Activated CD4-positive, alpha-beta memory T cell treated with anti-CD3 and anti-CD28 coated beads, Interleukin-2, amount 10 ng/mL, durations not matched to agents 7 days and 5 days (primary cell): ENCODE measurements at regions of chr9 and their contacts with region 1.

Region 1: GRCh38 chr9:19174127-19174912 is 47.0 kb upstream of the PLIN2 start:
- DNase-seq: peak; percentile 58
- H3K4me3 Mint-ChIP-seq: peak overlapping the region; percentile 57
- H3K27ac Mint-ChIP-seq: no peak overlapping the region
- H3K4me1 Mint-ChIP-seq: peaks cover 29% of the 10 kb centered on the region
- H3K27me3 Mint-ChIP-seq: no peaks in the 10 kb centered on the region

Region 2: GRCh38 chr9:19074229-19074628 is 100.1 kb before region 1 on chr9:
- CTCF ChIA-PET with region 1: no interaction called
- POLR2A ChIA-PET with region 1: no interaction called
- DNase-seq: no peak
- H3K4me3 Mint-ChIP-seq: no peak overlapping the region
- H3K27ac Mint-ChIP-seq: no peak overlapping the region
- H3K4me1 Mint-ChIP-seq: no peaks in the 10 kb centered on the region
- H3K27me3 Mint-ChIP-seq: no peaks in the 10 kb centered on the region

Region 3: DNA sequence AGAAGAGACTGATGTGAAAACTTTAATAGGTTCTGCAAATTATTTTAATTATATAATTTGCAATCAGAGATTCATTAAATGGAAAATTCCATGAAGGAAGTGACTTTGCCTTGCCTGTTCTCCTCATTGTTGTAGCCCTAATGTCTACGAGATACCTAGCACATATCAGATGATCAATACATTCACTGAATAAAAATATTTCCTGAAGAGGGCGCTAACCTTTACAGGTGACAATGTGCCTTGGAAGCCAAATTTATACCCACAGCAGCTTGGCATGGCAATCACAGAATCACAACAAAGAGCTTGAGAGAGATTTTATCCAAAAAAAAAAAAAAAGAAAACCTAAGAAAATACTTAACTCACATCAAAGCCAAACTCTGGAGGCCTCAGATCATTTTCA is 89.0 kb before region 1 on chr9:
- CTCF ChIA-PET with region 1: interaction called, 43 read pairs
- POLR2A ChIA-PET with region 1: interaction called, 3 read pairs
- DNase-seq: no peak
- H3K4me3 Mint-ChIP-seq: no peak overlapping the region
- H3K27ac Mint-ChIP-seq: no peak overlapping the region
- H3K4me1 Mint-ChIP-seq: peaks cover 2% of the 10 kb centered on the region
- H3K27me3 Mint-ChIP-seq: no peaks in the 10 kb centered on the region

Region 4: DNA sequence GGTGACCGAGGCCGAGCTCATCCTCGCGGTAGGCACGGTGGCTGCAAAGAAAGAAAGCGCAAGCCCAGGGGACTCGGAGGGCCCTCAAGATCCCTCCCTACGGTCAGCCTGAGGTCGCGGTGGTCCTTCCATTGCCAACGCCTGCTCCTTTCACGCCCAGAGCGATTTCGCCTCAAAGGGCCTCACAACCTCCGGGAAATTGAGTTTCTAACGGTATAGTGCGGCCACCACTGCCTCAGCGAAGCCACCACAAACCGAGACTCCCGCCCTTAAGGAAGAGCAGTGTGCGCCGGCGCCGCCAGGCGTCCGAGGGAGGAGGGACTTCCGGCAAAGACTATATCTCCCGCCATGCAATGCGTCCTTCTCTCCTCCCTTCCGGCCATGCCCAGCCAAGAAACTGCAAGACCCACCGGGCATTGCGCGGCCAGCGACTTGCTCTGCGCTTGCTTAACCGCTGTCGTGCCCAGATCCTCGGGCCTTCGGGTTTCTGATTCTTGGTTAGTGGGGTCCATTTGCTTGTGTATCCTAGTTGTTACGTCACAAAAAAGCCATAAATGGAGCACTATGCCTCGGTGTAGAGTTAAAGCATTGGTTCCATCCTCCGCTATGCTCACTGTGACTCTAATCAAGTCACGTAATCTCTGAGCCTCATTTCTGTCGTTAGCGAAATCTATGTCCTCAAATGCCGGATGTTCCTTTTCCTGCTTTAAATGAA is 71.5 kb before region 1 on chr9 and contains the start of gene HAUS6:
- CTCF ChIA-PET with region 1: interaction called, 13 read pairs
- POLR2A ChIA-PET with region 1: interaction called, 5 read pairs
- DNase-seq: peak; percentile 97
- H3K4me3 Mint-ChIP-seq: peak within 1 kb of the TSS; percentile 82
- H3K27ac Mint-ChIP-seq: peak within 1 kb of the TSS; percentile 93
- H3K4me1 Mint-ChIP-seq: peaks cover 32% of the 10 kb centered on the region
- H3K27me3 Mint-ChIP-seq: no peaks in the 10 kb centered on the region
- total RNA-seq, gene HAUS6: 26.4 to 26.5 TPM

Region 5: DNA sequence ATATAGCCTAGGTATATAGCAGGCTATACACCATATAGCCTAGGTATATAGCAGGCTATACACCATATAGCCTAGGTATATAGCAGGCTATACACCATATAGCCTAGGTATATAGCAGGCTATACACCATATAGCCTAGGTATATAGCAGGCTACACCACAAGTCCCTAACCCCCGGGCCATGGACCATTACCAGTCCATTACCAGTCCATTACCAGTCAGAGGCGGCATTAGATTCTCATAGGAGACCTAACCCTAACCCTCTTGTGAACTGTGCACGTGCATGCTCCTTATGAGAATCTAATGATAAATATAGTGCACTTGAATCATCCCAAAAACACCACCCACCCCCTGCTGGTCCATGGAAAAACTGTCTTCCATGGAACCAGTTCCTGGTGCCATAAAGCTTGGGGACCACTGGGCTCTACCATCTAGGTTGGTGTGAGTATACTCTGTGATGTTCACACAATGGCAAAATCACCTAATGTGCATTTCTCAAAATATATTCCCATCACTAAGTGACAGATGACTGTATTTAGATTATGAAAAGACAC is 51.8 kb before region 1 on chr9:
- CTCF ChIA-PET with region 1: interaction called, 21 read pairs
- POLR2A ChIA-PET with region 1: interaction called, 9 read pairs
- DNase-seq: no peak
- H3K4me3 Mint-ChIP-seq: no peak overlapping the region
- H3K27ac Mint-ChIP-seq: no peak overlapping the region
- H3K4me1 Mint-ChIP-seq: peaks cover 51% of the 10 kb centered on the region
- H3K27me3 Mint-ChIP-seq: no peaks in the 10 kb centered on the region

Region 6: DNA sequence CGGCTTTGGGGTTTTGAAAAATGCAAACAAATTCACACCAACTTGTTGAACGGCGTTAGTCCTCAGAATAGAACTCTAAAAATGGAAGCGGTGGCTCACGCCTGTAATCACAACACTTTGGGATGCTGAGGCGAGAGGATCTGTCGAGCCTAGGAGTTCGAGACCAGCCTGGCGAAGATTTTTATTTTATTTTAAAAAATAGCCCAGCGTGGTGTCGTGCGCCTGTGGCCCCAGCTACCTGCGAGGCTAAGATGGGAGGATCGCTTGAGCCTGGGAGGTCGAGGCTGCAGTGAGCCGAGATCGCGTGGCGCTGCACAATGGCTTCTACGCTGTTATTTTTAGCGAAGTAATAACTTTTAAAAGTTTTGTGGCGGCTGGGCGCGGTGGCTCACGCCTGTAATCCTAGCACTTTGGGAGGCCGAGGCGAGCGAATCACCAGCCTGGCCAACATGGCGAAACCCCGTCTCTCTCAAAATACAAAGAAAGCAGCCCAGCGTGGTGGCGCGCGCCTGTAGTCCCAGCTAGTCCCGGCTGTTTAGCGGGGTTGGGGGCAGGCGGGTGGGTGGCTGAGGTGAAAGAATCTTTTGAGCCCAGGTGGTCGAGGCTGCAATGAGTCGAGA is 46.3 kb before region 1 on chr9:
- CTCF ChIA-PET with region 1: interaction called, 21 read pairs
- POLR2A ChIA-PET with region 1: interaction called, 9 read pairs
- DNase-seq: peak; percentile 49
- H3K4me3 Mint-ChIP-seq: peak overlapping the region; percentile 97
- H3K27ac Mint-ChIP-seq: peak overlapping the region; percentile 98
- H3K4me1 Mint-ChIP-seq: peaks cover 61% of the 10 kb centered on the region
- H3K27me3 Mint-ChIP-seq: no peaks in the 10 kb centered on the region

Region 7: DNA sequence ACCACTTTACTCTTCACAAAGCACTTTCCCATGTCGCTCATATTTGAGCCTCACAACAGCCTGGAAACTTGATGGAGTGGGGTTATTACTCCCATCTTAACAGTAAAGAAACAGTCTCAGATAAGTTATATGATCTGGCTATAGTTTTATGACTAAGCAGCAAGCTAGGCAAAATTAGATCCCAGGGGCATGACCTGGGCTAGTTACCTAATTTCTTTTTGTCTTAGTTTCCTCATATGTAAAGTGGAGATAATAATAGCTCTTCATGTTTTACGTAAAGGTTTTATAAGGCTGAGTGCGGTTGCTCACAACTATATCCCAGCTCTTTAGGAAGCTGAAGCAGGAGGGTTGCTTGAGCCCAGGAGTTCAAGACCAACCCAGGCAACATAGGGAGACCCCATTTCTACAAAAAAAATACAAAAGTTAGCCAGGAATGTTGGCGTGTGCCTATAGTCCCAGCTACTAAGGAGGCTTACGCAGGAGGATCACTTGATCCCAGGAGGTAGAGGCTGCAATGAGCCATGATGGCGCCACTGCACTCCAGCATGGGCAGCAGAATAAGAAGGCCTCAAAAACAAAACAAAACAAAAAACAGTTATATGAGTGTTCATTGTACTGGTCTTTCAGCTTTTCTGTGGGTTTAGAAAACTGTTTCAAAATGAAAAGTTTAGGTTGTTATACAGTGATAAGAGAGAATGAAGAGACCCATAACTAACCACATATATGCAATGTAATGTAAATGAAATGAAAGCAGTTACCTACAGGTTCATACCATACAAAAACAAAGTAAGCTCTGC is 40.6 kb before region 1 on chr9:
- CTCF ChIA-PET with region 1: interaction called, 17 read pairs
- POLR2A ChIA-PET with region 1: interaction called, 4 read pairs
- DNase-seq: no peak
- H3K4me3 Mint-ChIP-seq: no peak overlapping the region
- H3K27ac Mint-ChIP-seq: peak overlapping the region; percentile 67
- H3K4me1 Mint-ChIP-seq: peaks cover 46% of the 10 kb centered on the region
- H3K27me3 Mint-ChIP-seq: no peaks in the 10 kb centered on the region

Region 8: GRCh38 chr9:19149230-19149629 is 25.1 kb before region 1 on chr9:
- CTCF ChIA-PET with region 1: no interaction called
- POLR2A ChIA-PET with region 1: no interaction called
- DNase-seq: no peak
- H3K4me3 Mint-ChIP-seq: no peak overlapping the region
- H3K27ac Mint-ChIP-seq: no peak overlapping the region
- H3K4me1 Mint-ChIP-seq: peaks cover 4% of the 10 kb centered on the region
- H3K27me3 Mint-ChIP-seq: no peaks in the 10 kb centered on the region

Region 9: DNA sequence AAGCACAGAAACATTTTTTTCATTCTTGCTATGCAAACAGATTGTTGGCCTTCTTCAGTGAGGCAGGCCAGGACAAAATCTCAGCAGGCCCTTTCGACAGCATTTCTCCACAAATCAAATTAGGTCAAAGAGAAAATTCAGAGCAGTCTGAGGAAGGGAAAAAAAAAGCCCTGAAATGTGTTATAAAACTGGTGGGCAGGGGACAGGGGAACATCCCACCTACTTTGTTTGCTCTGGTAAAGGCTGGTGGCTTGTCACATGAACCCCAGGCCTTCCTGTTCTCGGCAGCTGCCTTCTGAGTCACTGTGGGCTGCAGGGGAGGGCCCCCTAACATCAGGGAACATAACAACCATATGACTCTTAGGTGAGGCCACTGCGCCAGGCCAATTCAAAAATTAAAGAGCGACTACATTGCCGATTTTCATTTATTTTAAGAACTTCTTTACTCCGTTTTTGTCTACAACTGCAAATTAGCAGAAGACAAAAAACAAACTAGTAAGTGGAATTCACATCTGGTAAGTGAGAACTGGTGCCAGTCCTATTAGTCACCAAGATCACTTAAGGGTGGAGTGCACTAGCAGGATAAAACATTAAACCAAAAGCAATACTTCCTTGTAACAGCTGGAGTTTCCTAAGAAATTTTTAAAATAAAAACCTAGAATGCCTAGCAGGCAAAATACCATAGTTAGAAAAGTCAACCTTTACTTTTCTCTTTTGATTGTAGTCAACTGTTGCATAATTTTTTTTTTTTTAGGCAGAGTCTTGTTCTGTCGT is 10.0 kb after region 1 on chr9:
- CTCF ChIA-PET with region 1: interaction called, 17 read pairs
- POLR2A ChIA-PET with region 1: interaction called, 18 read pairs
- DNase-seq: peak; percentile 88
- H3K4me3 Mint-ChIP-seq: peak overlapping the region; percentile 55
- H3K27ac Mint-ChIP-seq: peak overlapping the region; percentile 99
- H3K4me1 Mint-ChIP-seq: peaks cover 41% of the 10 kb centered on the region
- H3K27me3 Mint-ChIP-seq: no peaks in the 10 kb centered on the region